ENCODE measurements at regions of chr6 and their contacts with region 1.

Region 1: DNA sequence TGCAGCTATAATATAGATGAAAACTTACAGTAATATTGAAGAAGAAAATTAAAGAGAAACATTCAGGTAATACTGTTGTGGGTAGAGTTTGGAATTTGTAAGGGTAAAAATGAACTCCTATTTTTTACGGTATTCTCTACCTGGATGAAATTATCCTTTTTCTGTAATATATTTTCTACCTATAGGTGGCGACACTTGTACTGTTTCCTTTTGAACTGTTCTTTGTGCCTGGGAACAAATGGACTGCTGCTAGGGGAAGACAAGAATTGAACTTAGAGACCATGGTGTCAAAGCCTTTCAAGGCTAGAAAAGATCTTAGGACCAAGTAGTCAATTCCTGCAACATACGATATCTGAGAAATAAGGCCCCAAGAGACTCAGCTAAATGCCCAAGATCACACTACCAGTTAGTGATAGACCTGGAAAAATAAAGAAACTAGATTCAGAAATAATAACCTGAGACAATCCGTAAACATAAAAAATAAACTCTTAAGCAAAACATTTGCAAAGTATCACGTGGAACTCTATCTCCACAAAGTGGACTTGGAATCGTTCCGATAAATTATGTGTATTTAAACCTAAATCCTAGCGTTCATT is 383.8 kb downstream of the TFAP2A start:
- DNase-seq: peak; percentile 16
- H3K4me3 ChIP-seq: no peak overlapping the region
- H3K27ac ChIP-seq: no peak overlapping the region
- H3K4me1 ChIP-seq: no peaks in the 10 kb centered on the region
- H3K27me3 ChIP-seq: no peaks in the 10 kb centered on the region
- CTCF ChIP-seq: peak; percentile 53 to 60

Region 2: DNA sequence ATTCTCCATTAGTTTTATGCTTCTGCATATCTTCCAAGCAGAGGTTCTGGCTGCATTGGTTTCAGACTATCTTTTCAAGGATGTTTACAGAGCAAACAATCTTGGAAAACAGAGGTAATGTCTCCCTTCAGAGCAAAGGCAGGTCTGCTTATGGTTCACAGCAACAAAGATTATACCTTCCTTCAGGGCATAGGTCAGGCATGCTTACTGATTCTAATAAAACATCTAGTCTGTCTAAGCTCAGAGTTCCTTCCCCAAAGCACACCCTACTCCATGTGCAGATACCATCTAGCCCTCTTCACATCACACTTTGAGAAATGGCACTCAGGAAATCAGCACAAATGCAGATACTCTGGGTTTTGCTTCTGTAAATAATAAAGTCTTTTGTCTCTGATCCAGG is 96.2 kb after region 1 on chr6:
- CTCF ChIA-PET with region 1: no interaction called
- dilution Hi-C with region 1: no loop called
- in situ Hi-C with region 1: no loop called
- intact Hi-C with region 1: no loop called
- DNase-seq: no peak
- H3K4me3 ChIP-seq: no peak overlapping the region
- H3K27ac ChIP-seq: no peak overlapping the region
- H3K4me1 ChIP-seq: no peaks in the 10 kb centered on the region
- H3K27me3 ChIP-seq: no peaks in the 10 kb centered on the region
- CTCF ChIP-seq: no peak

Region 3: DNA sequence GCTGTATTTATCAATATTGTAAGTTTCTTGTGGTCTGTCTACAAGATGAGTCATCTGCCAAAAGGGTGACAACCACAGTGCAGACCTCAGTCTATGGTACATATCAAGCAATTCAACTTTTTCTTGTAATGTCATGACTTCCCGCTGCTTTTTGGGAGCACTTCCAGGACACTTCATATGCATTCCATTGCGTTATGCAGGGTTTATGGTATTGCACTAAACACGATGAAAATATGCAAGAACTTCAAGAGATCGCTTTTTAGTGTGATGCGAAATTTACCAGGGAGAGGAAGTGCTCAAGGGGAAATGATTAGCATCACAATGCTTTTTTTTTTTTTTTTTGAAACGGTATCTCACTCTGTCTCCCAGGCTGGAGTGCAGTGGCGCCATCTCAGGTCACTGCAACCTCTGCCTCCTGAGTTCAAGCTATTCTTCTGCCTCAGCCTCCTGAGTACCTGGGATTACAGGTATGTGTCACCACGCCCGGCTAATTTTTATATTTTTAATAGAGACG is 217.4 kb after region 1 on chr6:
- CTCF ChIA-PET with region 1: no interaction called
- dilution Hi-C with region 1: no loop called
- in situ Hi-C with region 1: no loop called
- intact Hi-C with region 1: loop called (anchors 5 kb)
- DNase-seq: peak; percentile 53
- H3K4me3 ChIP-seq: no peak overlapping the region
- H3K27ac ChIP-seq: no peak overlapping the region
- H3K4me1 ChIP-seq: peaks cover 10% of the 10 kb centered on the region
- H3K27me3 ChIP-seq: no peaks in the 10 kb centered on the region
- CTCF ChIP-seq: peak; percentile 15 to 35